HCT116 (cell line): ENCODE measurements at regions of chr2 and their contacts with region 1.

Region 1: GRCh38 chr2:70948337-70949003 is 12.8 kb downstream of the ATP6V1B1 start:
- DNase-seq: peak; percentile 71
- ATAC-seq: peak; percentile 89
- H3K4me3 ChIP-seq: peak overlapping the region; percentile 58 to 59
- H3K27ac ChIP-seq: peak overlapping the region; percentile 7; the same call in 1 of the 2 replicates
- H3K4me1 ChIP-seq: peaks cover 16 to 34% of the 10 kb centered on the region in 2 experiments
- H3K27me3 ChIP-seq: no peaks in the 10 kb centered on the region
- CTCF ChIP-seq: peak; percentile 84 to 90 (median 88)
- POLR2A ChIP-seq: no peak
- RAD21 ChIP-seq: peak; percentile 41; the same call in 1 of the 2 replicates

Region 2: GRCh38 chr2:70656421-70657010 is 292.0 kb before region 1 on chr2:
- CTCF ChIA-PET with region 1: interaction called, 4 read pairs
- POLR2A ChIA-PET with region 1: no interaction called
- RAD21 ChIA-PET with region 1: no interaction called
- intact Hi-C with region 1: loop called (anchors 5 kb)
- DNase-seq: no peak
- ATAC-seq: no peak
- H3K4me3 ChIP-seq: no peak overlapping the region
- H3K27ac ChIP-seq: no peak overlapping the region
- H3K4me1 ChIP-seq: no peaks in the 10 kb centered on the region
- H3K27me3 ChIP-seq: no peaks in the 10 kb centered on the region
- CTCF ChIP-seq: no peak
- POLR2A ChIP-seq: no peak
- RAD21 ChIP-seq: no peak

Region 3: GRCh38 chr2:70789304-70790135 is 158.9 kb before region 1 on chr2:
- CTCF ChIA-PET with region 1: interaction called, 14 read pairs
- POLR2A ChIA-PET with region 1: no interaction called
- RAD21 ChIA-PET with region 1: interaction called, 3 read pairs
- intact Hi-C with region 1: loop called (anchors 1 kb)
- DNase-seq: peak; percentile 46
- ATAC-seq: peak; percentile 90
- H3K4me3 ChIP-seq: peak overlapping the region; percentile 3 to 42; a peak in 3 of 4 replicates
- H3K27ac ChIP-seq: no peak overlapping the region
- H3K4me1 ChIP-seq: peaks cover 0 to 8% of the 10 kb centered on the region in 2 experiments; a peak in 2 of 4 replicates
- H3K27me3 ChIP-seq: no peaks in the 10 kb centered on the region
- CTCF ChIP-seq: peak; percentile 77 to 84 (median 77)
- POLR2A ChIP-seq: no peak
- RAD21 ChIP-seq: peak; percentile 89

Region 4: GRCh38 chr2:70861777-70862625 is 86.5 kb before region 1 on chr2:
- CTCF ChIA-PET with region 1: interaction called, 6 read pairs
- POLR2A ChIA-PET with region 1: interaction called, 3 read pairs
- RAD21 ChIA-PET with region 1: no interaction called
- intact Hi-C with region 1: loop called (anchors 2 kb)
- DNase-seq: peak; percentile 71
- ATAC-seq: peak; percentile 97
- H3K4me3 ChIP-seq: no peak overlapping the region; a peak in 1 of 4 replicates
- H3K27ac ChIP-seq: no peak overlapping the region
- H3K4me1 ChIP-seq: peaks cover 0 to 3% of the 10 kb centered on the region in 2 experiments; a peak in 1 of 4 replicates
- H3K27me3 ChIP-seq: no peaks in the 10 kb centered on the region
- CTCF ChIP-seq: peak; percentile 98 to 99 (median 99)
- POLR2A ChIP-seq: no peak
- RAD21 ChIP-seq: peak; percentile 92

Region 5: GRCh38 chr2:70871398-70872211 is 76.9 kb before region 1 on chr2:
- CTCF ChIA-PET with region 1: interaction called, 79 read pairs
- POLR2A ChIA-PET with region 1: no interaction called
- RAD21 ChIA-PET with region 1: interaction called, 6 to 8 read pairs
- intact Hi-C with region 1: loop called (anchors 1 kb)
- DNase-seq: peak; percentile 70
- ATAC-seq: peak; percentile 100
- H3K4me3 ChIP-seq: peak overlapping the region; percentile 33 to 46
- H3K27ac ChIP-seq: no peak overlapping the region
- H3K4me1 ChIP-seq: peaks cover 3 to 12% of the 10 kb centered on the region in 2 experiments; a peak in 1 of 4 replicates
- H3K27me3 ChIP-seq: peaks cover 3% of the 10 kb centered on the region; the same call in 1 of the 2 replicates
- CTCF ChIP-seq: peak; percentile 81 to 98 (median 88)
- POLR2A ChIP-seq: no peak
- RAD21 ChIP-seq: peak; percentile 96

Region 6: DNA sequence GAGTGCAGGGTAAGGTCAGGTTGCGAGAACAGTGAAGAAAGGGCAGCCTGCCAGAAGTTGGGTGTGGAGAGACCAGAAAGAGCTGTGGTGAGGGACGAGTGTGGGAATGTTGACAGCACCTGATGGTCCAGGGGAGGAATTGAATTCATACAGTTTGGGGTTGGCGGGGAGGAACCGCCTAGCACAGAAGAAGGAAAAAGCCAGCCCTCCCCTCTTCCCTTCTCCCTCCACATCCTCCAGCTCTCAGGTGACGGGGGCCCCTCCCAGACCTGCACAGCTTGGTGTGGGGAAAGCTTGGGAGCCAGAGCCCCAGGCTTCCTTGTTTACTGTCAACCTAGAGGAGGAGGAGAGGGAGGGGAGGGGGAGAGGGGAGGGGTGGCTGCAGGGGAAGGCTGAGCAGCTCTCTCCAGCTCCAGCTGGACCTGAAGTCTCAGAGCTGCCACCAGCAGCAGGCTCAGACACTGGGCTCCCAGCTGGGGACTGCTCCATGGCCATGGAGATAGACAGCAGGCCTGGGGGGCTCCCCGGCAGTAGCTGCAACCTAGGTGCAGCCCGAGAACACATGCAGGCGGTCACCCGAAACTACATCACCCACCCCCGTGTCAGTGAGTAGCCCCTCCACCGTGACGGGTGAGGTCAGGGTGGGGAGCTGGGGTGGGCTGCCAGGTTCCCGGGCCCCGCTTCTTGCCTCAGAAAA is 12.9 kb before region 1 on chr2 and contains the start of gene ATP6V1B1:
- CTCF ChIA-PET with region 1: interaction called, 17 read pairs
- POLR2A ChIA-PET with region 1: no interaction called
- RAD21 ChIA-PET with region 1: no interaction called
- intact Hi-C with region 1: no loop called
- DNase-seq: no peak
- ATAC-seq: no peak
- H3K4me3 ChIP-seq: no peak within 1 kb of the TSS
- H3K27ac ChIP-seq: no peak within 1 kb of the TSS
- H3K4me1 ChIP-seq: peaks cover 0 to 4% of the 10 kb centered on the region in 2 experiments; a peak in 1 of 4 replicates
- H3K27me3 ChIP-seq: no peaks in the 10 kb centered on the region
- CTCF ChIP-seq: no peak
- POLR2A ChIP-seq: no peak
- RAD21 ChIP-seq: no peak
- total RNA-seq, gene ATP6V1B1: 0.74 TPM

Region 7: DNA sequence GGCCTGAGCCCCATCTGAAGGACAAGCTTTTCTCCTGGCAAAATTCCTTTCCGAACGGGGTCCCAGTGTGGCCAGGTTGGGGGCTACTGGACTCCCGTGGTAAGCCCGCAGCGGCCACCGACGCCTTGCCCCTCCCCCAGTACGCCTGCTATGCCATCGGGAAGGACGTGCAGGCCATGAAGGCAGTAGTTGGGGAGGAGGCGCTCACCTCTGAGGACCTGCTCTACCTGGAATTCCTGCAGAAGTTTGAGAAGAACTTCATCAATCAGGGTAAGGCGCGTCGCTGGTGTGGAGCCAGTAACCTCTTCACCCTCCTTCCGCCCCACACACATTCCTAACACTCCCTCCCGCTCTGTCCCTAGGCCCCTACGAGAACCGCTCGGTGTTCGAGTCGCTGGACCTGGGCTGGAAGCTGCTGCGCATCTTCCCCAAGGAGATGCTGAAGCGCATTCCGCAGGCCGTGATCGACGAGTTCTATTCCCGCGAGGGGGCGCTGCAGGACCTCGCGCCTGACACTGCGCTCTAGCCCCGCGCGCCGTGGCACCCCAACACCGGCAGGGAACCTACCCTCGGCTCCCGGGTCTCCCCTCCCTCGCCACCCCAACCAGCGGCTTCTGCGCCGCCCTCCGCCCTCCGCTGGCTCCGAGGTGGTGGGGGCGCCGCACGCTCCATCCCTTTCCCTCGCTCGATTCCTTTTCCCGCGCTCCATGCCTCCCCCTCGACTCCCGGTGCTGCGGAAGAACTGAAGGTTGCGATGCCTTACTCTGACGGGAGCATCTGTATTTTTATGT is 16.3 kb after region 1 on chr2:
- CTCF ChIA-PET with region 1: interaction called, 26 read pairs
- POLR2A ChIA-PET with region 1: no interaction called
- RAD21 ChIA-PET with region 1: no interaction called
- intact Hi-C with region 1: no loop called
- DNase-seq: peak; percentile 36
- ATAC-seq: peak; percentile 96
- H3K4me3 ChIP-seq: peak overlapping the region; percentile 37 to 49
- H3K27ac ChIP-seq: no peak overlapping the region
- H3K4me1 ChIP-seq: peaks cover 4 to 12% of the 10 kb centered on the region in 2 experiments; a peak in 3 of 4 replicates
- H3K27me3 ChIP-seq: no peaks in the 10 kb centered on the region
- CTCF ChIP-seq: peak; percentile 76 to 79 (median 78)
- POLR2A ChIP-seq: no peak
- RAD21 ChIP-seq: peak; percentile 75

Region 8: GRCh38 chr2:71008342-71008741 is 59.9 kb after region 1 on chr2:
- CTCF ChIA-PET with region 1: no interaction called
- POLR2A ChIA-PET with region 1: no interaction called
- RAD21 ChIA-PET with region 1: no interaction called
- intact Hi-C with region 1: no loop called
- DNase-seq: no peak
- ATAC-seq: no peak
- H3K4me3 ChIP-seq: no peak overlapping the region
- H3K27ac ChIP-seq: no peak overlapping the region
- H3K4me1 ChIP-seq: no peaks in the 10 kb centered on the region
- H3K27me3 ChIP-seq: no peaks in the 10 kb centered on the region
- CTCF ChIP-seq: no peak
- POLR2A ChIP-seq: no peak
- RAD21 ChIP-seq: no peak

Region 9: GRCh38 chr2:71068218-71069035 is 120.0 kb after region 1 on chr2 and contains the start of gene NAGK:
- CTCF ChIA-PET with region 1: no interaction called
- POLR2A ChIA-PET with region 1: no interaction called
- RAD21 ChIA-PET with region 1: no interaction called
- intact Hi-C with region 1: no loop called
- DNase-seq: peak; percentile 82
- ATAC-seq: peak; percentile 92
- H3K4me3 ChIP-seq: peak within 1 kb of the TSS; percentile 82 to 83
- H3K27ac ChIP-seq: peak within 1 kb of the TSS; percentile 62
- H3K4me1 ChIP-seq: peaks cover 10 to 22% of the 10 kb centered on the region in 2 experiments
- H3K27me3 ChIP-seq: no peaks in the 10 kb centered on the region
- CTCF ChIP-seq: no peak
- POLR2A ChIP-seq: peak; percentile 96
- RAD21 ChIP-seq: no peak
- total RNA-seq, gene NAGK: 36.8 TPM

Region 10: DNA sequence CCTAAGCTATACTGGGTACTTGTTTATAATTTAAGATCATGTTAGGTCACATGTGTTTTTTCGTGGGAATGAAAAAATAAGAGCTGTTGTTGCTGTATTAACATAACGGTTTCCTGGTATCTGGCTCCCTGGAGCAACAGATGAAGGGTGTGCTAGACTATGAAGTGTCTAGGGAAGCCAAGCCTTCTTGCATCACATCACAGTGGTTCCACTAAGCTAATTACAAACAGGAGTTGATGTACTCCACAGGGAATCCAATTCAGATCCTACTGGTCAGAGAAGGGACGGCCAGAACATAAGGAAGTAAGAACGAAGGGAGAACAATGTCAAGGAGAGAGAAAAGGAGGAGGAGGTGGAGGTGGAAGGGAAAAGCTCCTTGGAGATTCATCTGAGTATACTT is 1392.2 kb after region 1 on chr2:
- CTCF ChIA-PET with region 1: no interaction called
- POLR2A ChIA-PET with region 1: no interaction called
- RAD21 ChIA-PET with region 1: no interaction called
- intact Hi-C with region 1: no loop called
- DNase-seq: no peak
- ATAC-seq: no peak
- H3K4me3 ChIP-seq: no peak overlapping the region
- H3K27ac ChIP-seq: no peak overlapping the region
- H3K4me1 ChIP-seq: no peaks in the 10 kb centered on the region
- H3K27me3 ChIP-seq: no peaks in the 10 kb centered on the region
- CTCF ChIP-seq: no peak
- POLR2A ChIP-seq: no peak
- RAD21 ChIP-seq: no peak